A673 (cell line): ENCODE measurements at regions of chr11 and their contacts with region 1.

Region 1: GRCh38 chr11:122101625-122102291 is 14.3 kb downstream of the BLID start:
- DNase-seq: peak; percentile 93
- H3K4me3 ChIP-seq: peak overlapping the region; percentile 64
- H3K27ac ChIP-seq: peak overlapping the region; percentile 78
- H3K4me1 ChIP-seq: peaks cover 48% of the 10 kb centered on the region
- H3K27me3 ChIP-seq: no peaks in the 10 kb centered on the region
- CTCF ChIP-seq: peak; percentile 88

Region 2: DNA sequence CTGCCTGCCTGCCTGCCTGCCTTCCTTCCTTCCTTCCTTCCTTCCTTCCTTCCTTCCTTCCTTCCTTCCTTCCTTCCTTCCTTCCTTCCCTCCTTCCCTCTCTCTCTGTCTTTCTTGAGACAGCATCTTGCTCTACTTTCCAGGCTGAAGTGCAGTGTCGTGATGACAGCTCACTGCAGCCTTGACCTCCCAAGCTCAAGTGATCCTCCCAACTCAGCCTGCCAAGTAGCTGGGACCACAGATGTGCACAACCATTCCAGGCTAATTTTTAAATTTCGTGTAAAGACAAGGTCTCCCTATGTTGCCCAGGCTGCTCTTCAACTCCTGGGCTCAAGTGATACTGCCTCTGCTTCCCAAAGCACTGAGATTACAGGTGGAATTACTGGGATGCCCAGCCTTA is 320.8 kb before region 1 on chr11:
- CTCF ChIA-PET with region 1: no interaction called
- POLR2A ChIA-PET with region 1: no interaction called
- intact Hi-C with region 1: loop called (anchors 5 kb)
- DNase-seq: peak; percentile 82
- H3K4me3 ChIP-seq: no peak overlapping the region
- H3K27ac ChIP-seq: no peak overlapping the region
- H3K4me1 ChIP-seq: no peaks in the 10 kb centered on the region
- H3K27me3 ChIP-seq: no peaks in the 10 kb centered on the region
- CTCF ChIP-seq: no peak

Region 3: DNA sequence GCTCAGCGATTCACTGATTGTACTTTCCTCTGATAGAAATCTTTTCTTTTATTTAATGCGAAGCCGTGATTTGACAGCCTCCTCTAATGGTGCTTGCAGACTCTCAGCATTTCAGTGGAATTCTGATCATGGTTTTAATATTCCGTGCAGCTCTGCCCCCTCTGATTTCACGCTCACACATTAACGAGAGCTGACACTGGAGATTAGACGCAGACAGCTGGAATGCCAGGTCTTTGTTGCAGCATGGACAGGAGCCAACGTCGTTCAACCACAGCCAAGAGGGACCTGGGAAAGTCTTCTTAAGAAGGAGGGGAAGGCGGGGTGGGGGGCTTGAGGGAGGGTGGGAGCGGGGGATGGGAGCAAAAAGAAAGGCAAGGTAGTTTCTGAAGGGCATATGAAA is 172.2 kb before region 1 on chr11:
- CTCF ChIA-PET with region 1: no interaction called
- POLR2A ChIA-PET with region 1: no interaction called
- intact Hi-C with region 1: loop called (anchors 5 kb)
- DNase-seq: peak; percentile 96
- H3K4me3 ChIP-seq: peak overlapping the region; percentile 38
- H3K27ac ChIP-seq: peak overlapping the region; percentile 79
- H3K4me1 ChIP-seq: peaks cover 28% of the 10 kb centered on the region
- H3K27me3 ChIP-seq: no peaks in the 10 kb centered on the region
- CTCF ChIP-seq: no peak

Region 4: GRCh38 chr11:122020902-122021301 is 80.9 kb before region 1 on chr11:
- CTCF ChIA-PET with region 1: interaction called, 10 read pairs
- POLR2A ChIA-PET with region 1: interaction called, 3 read pairs
- intact Hi-C with region 1: loop called (anchors 1 kb)
- DNase-seq: peak; percentile 70
- H3K4me3 ChIP-seq: no peak overlapping the region
- H3K27ac ChIP-seq: no peak overlapping the region
- H3K4me1 ChIP-seq: peaks cover 7% of the 10 kb centered on the region
- H3K27me3 ChIP-seq: no peaks in the 10 kb centered on the region
- CTCF ChIP-seq: peak; percentile 82